ENCODE measurements at regions of chr4 and their contacts with region 1.

Region 1: DNA sequence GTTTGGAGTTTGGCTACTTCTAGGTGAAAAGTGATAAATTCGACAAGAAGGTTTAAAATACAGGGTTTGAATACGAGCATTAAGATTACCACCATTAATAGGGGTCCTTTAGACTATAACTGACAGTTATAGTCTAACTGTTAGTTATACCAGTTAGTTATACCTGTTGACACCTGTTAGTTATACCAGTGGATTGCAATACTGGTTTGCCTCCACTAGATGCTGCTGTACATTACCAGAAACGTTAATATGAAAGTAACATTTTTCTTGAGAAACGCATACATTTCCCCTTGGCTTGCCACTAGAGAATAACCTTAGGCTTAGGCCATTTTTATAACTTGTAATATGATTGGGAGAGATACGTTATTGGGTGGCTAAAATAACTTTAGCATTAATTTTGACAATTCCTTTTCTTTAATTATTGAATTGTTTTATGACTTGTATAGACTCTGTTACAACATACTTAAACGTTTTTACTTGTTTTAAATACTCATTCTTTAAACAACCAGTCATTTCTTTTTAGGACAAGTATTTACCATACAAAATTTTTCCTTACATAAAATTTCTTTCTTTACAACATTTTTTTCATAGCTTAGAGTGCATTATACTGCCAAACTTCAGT is 911.2 kb downstream of the FSTL5 start:
- DNase-seq: peak; percentile 53
- H3K4me3 ChIP-seq: no peak overlapping the region
- H3K27ac ChIP-seq: no peak overlapping the region
- H3K4me1 ChIP-seq: no peaks in the 10 kb centered on the region
- H3K27me3 ChIP-seq: no peaks in the 10 kb centered on the region
- CTCF ChIP-seq: peak; percentile 57 to 70
- POLR2A ChIP-seq: no peak

Region 2: DNA sequence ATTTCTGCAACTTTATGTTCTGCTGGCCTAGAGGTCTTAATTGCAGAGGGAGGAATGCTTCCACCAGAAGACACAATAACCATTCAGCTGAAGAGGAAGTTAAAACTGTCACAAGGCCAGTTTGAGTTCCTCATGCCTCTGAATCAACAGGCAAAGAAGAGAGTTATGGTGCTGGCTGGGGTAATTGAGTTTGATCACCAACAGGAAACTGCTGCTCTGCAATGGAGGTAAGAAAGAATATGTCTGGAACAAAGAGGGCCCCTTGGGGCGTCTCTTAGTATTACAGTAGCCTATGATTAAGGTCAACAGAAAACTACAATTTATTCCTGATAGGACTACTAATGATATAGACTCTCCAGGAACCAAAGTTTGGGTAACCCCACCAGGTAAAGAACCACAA is 167.2 kb after region 1 on chr4:
- CTCF ChIA-PET with region 1: interaction called, 3 read pairs
- POLR2A ChIA-PET with region 1: no interaction called
- dilution Hi-C with region 1: no loop called
- intact Hi-C with region 1: loop called (anchors 10 kb)
- DNase-seq: peak; percentile 25
- H3K4me3 ChIP-seq: no peak overlapping the region
- H3K27ac ChIP-seq: no peak overlapping the region
- H3K4me1 ChIP-seq: no peaks in the 10 kb centered on the region
- H3K27me3 ChIP-seq: no peaks in the 10 kb centered on the region
- CTCF ChIP-seq: no peak
- POLR2A ChIP-seq: no peak

Region 3: DNA sequence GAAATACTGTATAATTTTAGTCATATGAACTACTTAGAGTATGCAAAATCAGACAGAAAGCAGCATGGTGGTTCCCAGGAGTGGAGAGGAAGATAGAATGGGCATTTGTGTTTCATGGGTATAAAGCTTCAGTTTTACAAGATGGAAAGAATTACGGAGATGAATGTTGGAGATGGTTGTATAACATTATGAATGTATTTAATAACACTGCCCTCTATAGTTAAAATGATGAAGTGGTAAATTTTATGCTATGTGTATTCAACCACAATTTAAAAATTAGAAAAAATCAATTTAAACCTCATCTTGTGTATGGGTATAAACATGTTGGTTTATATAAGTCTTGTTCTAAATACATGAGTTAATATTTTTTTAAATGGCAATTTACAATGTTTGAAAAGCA is 390.1 kb after region 1 on chr4:
- CTCF ChIA-PET with region 1: interaction called, 5 read pairs
- POLR2A ChIA-PET with region 1: no interaction called
- dilution Hi-C with region 1: no loop called
- intact Hi-C with region 1: loop called (anchors 5 kb)
- DNase-seq: peak; percentile 67
- H3K4me3 ChIP-seq: peak overlapping the region in 1 of 3 experiments; percentile 54
- H3K27ac ChIP-seq: no peak overlapping the region
- H3K4me1 ChIP-seq: peaks cover 8% of the 10 kb centered on the region
- H3K27me3 ChIP-seq: no peaks in the 10 kb centered on the region
- CTCF ChIP-seq: peak in 1 of 2 donors; percentile 10
- POLR2A ChIP-seq: no peak

Region 4: DNA sequence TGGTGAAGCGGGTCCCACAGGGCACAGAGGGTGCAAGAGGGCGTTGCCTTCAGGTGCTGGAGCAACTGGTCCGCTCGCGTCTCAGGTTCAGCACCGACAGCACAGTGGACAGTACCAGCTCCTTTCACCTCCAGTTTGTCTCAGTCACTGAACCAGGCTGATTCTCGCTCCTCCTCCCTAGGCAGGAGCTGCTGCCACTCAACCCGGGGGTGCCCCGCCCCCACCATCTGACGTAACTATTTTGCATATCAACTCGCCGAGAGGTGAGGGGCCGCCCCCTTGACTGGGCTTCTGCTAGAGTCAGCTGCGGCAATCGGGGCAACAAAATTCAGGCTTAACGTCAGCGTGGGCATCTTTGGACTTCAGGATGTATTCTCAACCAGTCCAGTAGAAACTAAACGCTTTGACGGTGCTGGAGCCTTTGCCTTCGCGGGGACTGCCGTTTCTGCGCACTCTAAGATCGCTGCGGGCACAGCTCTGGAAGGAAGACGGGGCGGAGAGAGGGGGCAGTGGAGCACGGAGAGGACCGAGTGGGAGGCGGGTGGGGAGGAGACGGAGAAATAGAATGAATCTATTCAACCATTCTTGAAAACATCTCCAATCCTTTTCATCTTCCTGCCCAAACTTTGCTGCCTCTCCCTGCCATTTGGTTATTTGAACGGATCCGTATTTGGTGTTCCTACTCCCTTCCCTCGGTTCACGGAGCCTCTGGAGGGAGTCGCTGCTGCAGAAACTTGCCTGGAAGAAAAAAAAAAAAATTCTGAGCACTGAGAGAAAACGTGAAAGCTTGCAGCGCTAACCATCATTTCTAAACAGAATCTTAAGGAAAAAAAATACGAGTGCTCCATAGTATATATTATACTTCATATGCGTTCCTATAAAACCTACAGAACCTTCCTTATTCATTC is 911.5 kb after region 1 on chr4 and contains the start of gene FSTL5:
- CTCF ChIA-PET with region 1: interaction called, 23 read pairs
- POLR2A ChIA-PET with region 1: no interaction called
- dilution Hi-C with region 1: no loop called
- intact Hi-C with region 1: loop called (anchors 1 kb)
- DNase-seq: peak; percentile 82
- H3K4me3 ChIP-seq: peak within 1 kb of the TSS; percentile 4 to 82 (median 79)
- H3K27ac ChIP-seq: peak within 1 kb of the TSS; percentile 5
- H3K4me1 ChIP-seq: peaks cover 13% of the 10 kb centered on the region
- H3K27me3 ChIP-seq: peaks cover 0 to 1% of the 10 kb centered on the region in 2 experiments
- CTCF ChIP-seq: no peak
- POLR2A ChIP-seq: peak; percentile 52
- total RNA-seq, gene FSTL5: 1.3 and 1.6 TPM in 2 replicates

Region 5: DNA sequence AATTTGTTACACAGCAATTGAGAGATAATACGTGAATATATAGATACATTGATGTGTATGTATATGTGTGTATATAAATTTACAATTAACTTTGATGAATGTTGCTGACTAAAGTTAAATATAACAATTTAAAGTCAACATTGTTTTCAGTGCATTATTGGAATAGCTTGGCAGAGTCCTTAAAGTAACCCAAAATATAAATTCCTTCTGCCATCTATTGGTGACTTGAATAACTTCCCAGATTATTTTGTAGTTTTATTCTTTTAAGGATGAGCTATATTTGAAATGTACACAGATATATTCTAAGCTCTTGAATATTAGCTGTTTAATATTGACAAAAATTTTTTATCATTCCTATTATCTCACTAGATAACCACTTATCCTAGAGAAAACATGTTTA is 1209.3 kb after region 1 on chr4:
- CTCF ChIA-PET with region 1: interaction called, 7 read pairs
- POLR2A ChIA-PET with region 1: no interaction called
- dilution Hi-C with region 1: no loop called
- intact Hi-C with region 1: loop called (anchors 10 kb)
- DNase-seq: no peak
- H3K4me3 ChIP-seq: no peak overlapping the region
- H3K27ac ChIP-seq: no peak overlapping the region
- H3K4me1 ChIP-seq: no peaks in the 10 kb centered on the region
- H3K27me3 ChIP-seq: no peaks in the 10 kb centered on the region
- CTCF ChIP-seq: no peak
- POLR2A ChIP-seq: no peak

Region 6: GRCh38 chr4:163042306-163042705 is 1789.7 kb after region 1 on chr4:
- CTCF ChIA-PET with region 1: no interaction called
- POLR2A ChIA-PET with region 1: no interaction called
- dilution Hi-C with region 1: no loop called
- intact Hi-C with region 1: loop called (anchors 5 kb)
- DNase-seq: no peak
- H3K4me3 ChIP-seq: no peak overlapping the region
- H3K27ac ChIP-seq: no peak overlapping the region
- H3K4me1 ChIP-seq: no peaks in the 10 kb centered on the region
- H3K27me3 ChIP-seq: no peaks in the 10 kb centered on the region
- CTCF ChIP-seq: no peak
- POLR2A ChIP-seq: no peak